ENCODE measurements at regions of chr14 and their contacts with region 1.

Region 1: DNA sequence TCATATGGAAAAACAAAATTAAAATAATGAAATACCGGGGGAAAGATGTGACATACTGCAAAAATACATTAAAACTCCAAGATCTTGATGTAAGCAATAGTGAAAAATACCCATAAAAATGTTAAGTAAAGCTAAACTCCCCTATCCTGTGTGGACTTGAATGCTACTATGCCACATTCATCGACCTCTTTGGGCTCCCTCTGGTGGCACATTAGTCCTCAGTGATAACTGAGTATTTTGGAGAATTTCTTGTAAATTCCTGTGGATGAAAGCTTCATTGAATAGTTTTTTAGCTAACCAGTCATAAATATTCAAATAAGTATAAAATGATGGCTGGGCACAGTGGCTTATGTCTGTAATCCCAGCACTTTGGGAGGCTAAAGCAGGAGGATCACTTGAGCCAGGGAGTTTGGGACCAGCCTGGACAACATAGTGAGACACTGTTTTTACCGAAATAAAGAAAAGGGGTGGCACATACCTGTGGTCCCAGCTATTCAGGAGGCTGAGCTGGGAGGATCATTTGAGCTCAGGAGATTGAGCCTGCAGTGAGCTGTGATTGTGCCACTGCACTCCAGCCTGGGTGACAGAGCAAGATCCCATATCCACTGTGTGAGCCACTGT is 42.4 kb upstream of the SGPP1 start:
- DNase-seq: peak; percentile 11 to 79 (median 46)
- ATAC-seq: peak; percentile 76
- H3K4me3 ChIP-seq: no peak overlapping the region
- H3K4me3 Mint-ChIP-seq: no peak overlapping the region
- H3K27ac ChIP-seq: no peak overlapping the region
- H3K27ac Mint-ChIP-seq: no peak overlapping the region
- H3K4me1 ChIP-seq: no peaks in the 10 kb centered on the region
- H3K4me1 Mint-ChIP-seq: peaks cover 5% of the 10 kb centered on the region
- H3K27me3 ChIP-seq: no peaks in the 10 kb centered on the region
- H3K27me3 Mint-ChIP-seq: no peaks in the 10 kb centered on the region
- CTCF ChIP-seq: peak; percentile 75

Region 2: GRCh38 chr14:63388763-63389431 is 381.4 kb before region 1 on chr14:
- CTCF ChIA-PET with region 1: interaction called, 10 read pairs
- POLR2A ChIA-PET with region 1: no interaction called
- intact Hi-C with region 1: loop called (anchors 1 to 5 kb)
- DNase-seq: peak; percentile 11 to 60 (median 29)
- ATAC-seq: peak; percentile 60
- H3K4me3 ChIP-seq: no peak overlapping the region
- H3K4me3 Mint-ChIP-seq: no peak overlapping the region
- H3K27ac ChIP-seq: no peak overlapping the region
- H3K27ac Mint-ChIP-seq: no peak overlapping the region
- H3K4me1 ChIP-seq: peaks cover 2% of the 10 kb centered on the region
- H3K4me1 Mint-ChIP-seq: peaks cover 3% of the 10 kb centered on the region
- H3K27me3 ChIP-seq: no peaks in the 10 kb centered on the region
- H3K27me3 Mint-ChIP-seq: no peaks in the 10 kb centered on the region
- CTCF ChIP-seq: peak; percentile 54

Region 3: GRCh38 chr14:63632932-63633514 is 137.3 kb before region 1 on chr14:
- CTCF ChIA-PET with region 1: interaction called, 17 read pairs
- POLR2A ChIA-PET with region 1: interaction called, 7 read pairs
- intact Hi-C with region 1: loop called (anchors 1 kb)
- DNase-seq: peak in 3 of 14 experiments; percentile 64 to 71 (median 66)
- ATAC-seq: peak; percentile 96
- H3K4me3 ChIP-seq: no peak overlapping the region
- H3K4me3 Mint-ChIP-seq: no peak overlapping the region
- H3K27ac ChIP-seq: no peak overlapping the region
- H3K27ac Mint-ChIP-seq: peak overlapping the region; percentile 11
- H3K4me1 ChIP-seq: peaks cover 2% of the 10 kb centered on the region
- H3K4me1 Mint-ChIP-seq: peaks cover 57% of the 10 kb centered on the region
- H3K27me3 ChIP-seq: no peaks in the 10 kb centered on the region
- H3K27me3 Mint-ChIP-seq: no peaks in the 10 kb centered on the region
- CTCF ChIP-seq: peak; percentile 88

Region 4: GRCh38 chr14:63641473-63642228 is 128.6 kb before region 1 on chr14 and contains the start of gene WDR89:
- CTCF ChIA-PET with region 1: interaction called, 11 read pairs
- POLR2A ChIA-PET with region 1: interaction called, 24 read pairs
- intact Hi-C with region 1: no loop called
- DNase-seq: peak; percentile 90 to 99 (median 94)
- ATAC-seq: peak; percentile 83
- H3K4me3 ChIP-seq: peak within 1 kb of the TSS; percentile 96
- H3K4me3 Mint-ChIP-seq: peak within 1 kb of the TSS; percentile 91
- H3K27ac ChIP-seq: peak within 1 kb of the TSS; percentile 98 to 99
- H3K27ac Mint-ChIP-seq: peak within 1 kb of the TSS; percentile 91
- H3K4me1 ChIP-seq: peaks cover 27% of the 10 kb centered on the region
- H3K4me1 Mint-ChIP-seq: peaks cover 43% of the 10 kb centered on the region
- H3K27me3 ChIP-seq: no peaks in the 10 kb centered on the region
- H3K27me3 Mint-ChIP-seq: no peaks in the 10 kb centered on the region
- CTCF ChIP-seq: peak; percentile 47
- total RNA-seq, gene WDR89: 12.4 to 13.4 TPM

Measured in CD4-positive, alpha-beta T cell (primary cell).